ENCODE measurements at regions of chr10 and their contacts with region 1.

Region 1: GRCh38 chr10:102729029-102730026 is 14.4 kb upstream of the WBP1L start:
- DNase-seq: peak; percentile 87
- H3K4me3 Mint-ChIP-seq: no peak overlapping the region
- H3K27ac Mint-ChIP-seq: no peak overlapping the region
- H3K4me1 Mint-ChIP-seq: peaks cover 5% of the 10 kb centered on the region
- H3K27me3 Mint-ChIP-seq: no peaks in the 10 kb centered on the region

Region 2: GRCh38 chr10:101682172-101682825 is 1047.0 kb before region 1 on chr10:
- intact Hi-C with region 1: no loop called
- DNase-seq: no peak
- H3K4me3 Mint-ChIP-seq: no peak overlapping the region
- H3K27ac Mint-ChIP-seq: no peak overlapping the region
- H3K4me1 Mint-ChIP-seq: peaks cover 11% of the 10 kb centered on the region
- H3K27me3 Mint-ChIP-seq: no peaks in the 10 kb centered on the region

Region 3: DNA sequence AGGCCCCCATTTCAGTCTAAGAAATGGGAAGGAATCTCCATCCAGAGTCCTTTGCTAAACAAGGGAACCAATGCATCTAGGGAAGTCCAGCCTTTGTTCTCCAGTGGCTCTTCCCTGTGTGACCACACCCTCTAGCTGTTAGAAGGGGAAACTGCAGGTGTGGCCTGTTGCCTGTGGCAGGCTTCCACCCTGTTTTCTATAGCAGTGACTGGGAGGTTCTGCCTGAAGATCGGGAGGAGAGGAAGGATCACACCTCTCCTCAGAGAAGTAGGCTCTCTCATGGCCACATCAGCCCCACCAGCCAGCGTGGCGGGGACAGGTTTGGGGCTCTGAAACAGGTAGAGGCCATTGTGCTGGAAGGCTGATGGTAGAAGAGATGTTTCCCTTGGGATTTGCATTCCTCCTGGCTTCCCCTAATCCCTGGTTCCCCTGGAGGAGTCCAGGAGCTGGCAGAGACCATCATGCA is 132.8 kb before region 1 on chr10:
- intact Hi-C with region 1: no loop called
- DNase-seq: peak; percentile 79
- H3K4me3 Mint-ChIP-seq: no peak overlapping the region
- H3K27ac Mint-ChIP-seq: no peak overlapping the region
- H3K4me1 Mint-ChIP-seq: peaks cover 2% of the 10 kb centered on the region
- H3K27me3 Mint-ChIP-seq: no peaks in the 10 kb centered on the region

Region 4: DNA sequence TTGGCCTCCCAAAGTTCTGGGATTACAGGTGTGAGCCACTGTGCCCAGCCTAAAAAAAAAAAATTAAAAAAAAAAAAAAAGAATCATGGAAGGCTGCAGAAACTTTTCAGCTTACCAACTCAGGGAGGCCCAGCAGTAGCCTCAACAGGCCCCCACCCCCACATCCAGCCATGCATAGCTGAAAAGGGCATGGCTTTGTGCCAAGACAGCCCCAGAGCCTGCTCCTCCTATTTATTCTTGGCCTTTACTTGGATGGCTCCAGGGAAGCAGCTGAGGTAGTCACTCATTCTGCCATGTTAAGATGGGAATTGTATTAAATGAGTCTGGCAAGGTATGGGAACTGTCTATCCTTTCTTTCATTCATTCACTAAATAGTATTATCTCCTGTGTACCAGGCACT is 175.0 kb after region 1 on chr10:
- intact Hi-C with region 1: loop called (anchors 5 kb)
- DNase-seq: no peak
- H3K4me3 Mint-ChIP-seq: no peak overlapping the region
- H3K27ac Mint-ChIP-seq: no peak overlapping the region
- H3K4me1 Mint-ChIP-seq: no peaks in the 10 kb centered on the region
- H3K27me3 Mint-ChIP-seq: no peaks in the 10 kb centered on the region